CD8-positive, alpha-beta T cell (primary cell): ENCODE measurements at regions of chr11 and their contacts with region 1.

Region 1: GRCh38 chr11:118807800-118808778 is 17.1 kb upstream of the DDX6 start:
- DNase-seq: peak in 1 of 9 experiments; percentile 24
- ATAC-seq: peak; percentile 69
- H3K4me3 ChIP-seq: no peak overlapping the region
- H3K4me3 Mint-ChIP-seq: no peak overlapping the region
- H3K27ac ChIP-seq: no peak overlapping the region
- H3K27ac Mint-ChIP-seq: peak overlapping the region; percentile 70
- H3K4me1 ChIP-seq: peaks cover 13% of the 10 kb centered on the region
- H3K4me1 Mint-ChIP-seq: peaks cover 16% of the 10 kb centered on the region
- H3K27me3 ChIP-seq: peaks cover 0 to 3% of the 10 kb centered on the region in 2 experiments
- H3K27me3 Mint-ChIP-seq: no peaks in the 10 kb centered on the region
- CTCF ChIP-seq: no peak

Region 2: GRCh38 chr11:118771547-118772288 is 36.4 kb before region 1 on chr11:
- CTCF ChIA-PET with region 1: no interaction called
- POLR2A ChIA-PET with region 1: no interaction called
- intact Hi-C with region 1: no loop called
- DNase-seq: no peak
- ATAC-seq: no peak
- H3K4me3 ChIP-seq: no peak overlapping the region
- H3K4me3 Mint-ChIP-seq: peak overlapping the region; percentile 63
- H3K27ac ChIP-seq: peak overlapping the region in 1 of 2 experiments; percentile 0
- H3K27ac Mint-ChIP-seq: peak overlapping the region; percentile 71
- H3K4me1 ChIP-seq: peaks cover 78% of the 10 kb centered on the region
- H3K4me1 Mint-ChIP-seq: peaks cover 89% of the 10 kb centered on the region
- H3K27me3 ChIP-seq: no peaks in the 10 kb centered on the region
- H3K27me3 Mint-ChIP-seq: no peaks in the 10 kb centered on the region
- CTCF ChIP-seq: no peak

Region 3: GRCh38 chr11:118845369-118845768 is 37.3 kb after region 1 on chr11:
- CTCF ChIA-PET with region 1: no interaction called
- POLR2A ChIA-PET with region 1: no interaction called
- intact Hi-C with region 1: loop called in 1 of 2 experiments (anchors 5 kb)
- DNase-seq: no peak
- ATAC-seq: no peak
- H3K4me3 ChIP-seq: no peak overlapping the region
- H3K4me3 Mint-ChIP-seq: no peak overlapping the region
- H3K27ac ChIP-seq: no peak overlapping the region
- H3K27ac Mint-ChIP-seq: no peak overlapping the region
- H3K4me1 ChIP-seq: no peaks in the 10 kb centered on the region
- H3K4me1 Mint-ChIP-seq: peaks cover 25% of the 10 kb centered on the region
- H3K27me3 ChIP-seq: no peaks in the 10 kb centered on the region
- H3K27me3 Mint-ChIP-seq: no peaks in the 10 kb centered on the region
- CTCF ChIP-seq: no peak

Region 4: DNA sequence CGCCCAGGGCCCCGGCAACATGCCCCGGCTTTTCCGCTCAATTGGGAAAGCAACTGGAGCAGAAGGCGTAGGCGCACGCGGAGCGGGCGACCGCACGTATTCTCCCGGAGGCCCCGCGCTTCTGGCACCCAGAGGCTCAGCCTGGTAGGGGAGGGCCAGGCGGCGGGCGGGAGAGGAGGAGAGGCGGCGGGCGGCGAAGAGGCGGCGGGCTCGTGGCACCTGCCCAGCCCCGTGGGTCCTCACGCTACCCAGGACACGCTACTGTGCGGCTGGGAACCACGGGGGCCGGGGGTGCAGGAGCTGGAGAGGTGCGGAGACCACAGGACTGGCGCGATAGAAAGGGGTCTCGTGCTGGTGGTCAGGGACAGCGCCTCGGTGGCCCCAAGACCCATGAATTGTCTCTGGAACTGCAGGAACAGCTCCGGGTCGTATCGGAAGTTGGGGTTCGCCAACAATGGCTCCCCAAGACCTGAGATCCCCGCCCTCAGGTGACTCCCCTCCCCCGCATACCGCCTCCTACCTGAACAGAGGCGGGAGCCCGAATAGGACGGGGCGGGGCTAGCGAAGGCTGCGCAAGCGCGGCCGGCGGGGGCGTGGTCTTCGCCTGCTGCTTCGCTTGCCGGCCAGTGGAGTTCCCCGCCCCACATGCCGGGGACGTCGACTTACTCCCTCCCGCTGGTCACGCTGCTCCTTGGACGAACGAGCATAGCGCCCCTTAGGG is 222.4 kb after region 1 on chr11 and contains the start of gene SLC37A4:
- CTCF ChIA-PET with region 1: no interaction called
- POLR2A ChIA-PET with region 1: no interaction called
- intact Hi-C with region 1: no loop called
- DNase-seq: peak; percentile 97 to 100 (median 99)
- ATAC-seq: peak; percentile 93
- H3K4me3 ChIP-seq: peak within 1 kb of the TSS; percentile 94 to 99
- H3K4me3 Mint-ChIP-seq: peak within 1 kb of the TSS; percentile 89
- H3K27ac ChIP-seq: peak within 1 kb of the TSS; percentile 65 to 71
- H3K27ac Mint-ChIP-seq: peak within 1 kb of the TSS; percentile 88
- H3K4me1 ChIP-seq: peaks cover 13% of the 10 kb centered on the region
- H3K4me1 Mint-ChIP-seq: peaks cover 18% of the 10 kb centered on the region
- H3K27me3 ChIP-seq: no peaks in the 10 kb centered on the region
- H3K27me3 Mint-ChIP-seq: no peaks in the 10 kb centered on the region
- CTCF ChIP-seq: peak; percentile 34
- total RNA-seq, gene SLC37A4: 4.0 to 4.6 TPM